ENCODE measurements at regions of chr15 and their contacts with region 1.

Region 1: GRCh38 chr15:93035953-93036800 is 52.8 kb downstream of the RGMA start:
- DNase-seq: peak; percentile 59
- H3K4me3 Mint-ChIP-seq: no peak overlapping the region
- H3K27ac Mint-ChIP-seq: no peak overlapping the region
- H3K4me1 Mint-ChIP-seq: peaks cover 9% of the 10 kb centered on the region
- H3K27me3 Mint-ChIP-seq: no peaks in the 10 kb centered on the region
- CTCF ChIP-seq: peak; percentile 55

Region 2: GRCh38 chr15:93063262-93063671 is 27.1 kb after region 1 on chr15:
- CTCF ChIA-PET with region 1: interaction called, 32 read pairs
- POLR2A ChIA-PET with region 1: no interaction called
- intact Hi-C with region 1: no loop called
- DNase-seq: peak; percentile 34
- H3K4me3 Mint-ChIP-seq: no peak overlapping the region
- H3K27ac Mint-ChIP-seq: no peak overlapping the region
- H3K4me1 Mint-ChIP-seq: peaks cover 10% of the 10 kb centered on the region
- H3K27me3 Mint-ChIP-seq: no peaks in the 10 kb centered on the region
- CTCF ChIP-seq: no peak

Region 3: DNA sequence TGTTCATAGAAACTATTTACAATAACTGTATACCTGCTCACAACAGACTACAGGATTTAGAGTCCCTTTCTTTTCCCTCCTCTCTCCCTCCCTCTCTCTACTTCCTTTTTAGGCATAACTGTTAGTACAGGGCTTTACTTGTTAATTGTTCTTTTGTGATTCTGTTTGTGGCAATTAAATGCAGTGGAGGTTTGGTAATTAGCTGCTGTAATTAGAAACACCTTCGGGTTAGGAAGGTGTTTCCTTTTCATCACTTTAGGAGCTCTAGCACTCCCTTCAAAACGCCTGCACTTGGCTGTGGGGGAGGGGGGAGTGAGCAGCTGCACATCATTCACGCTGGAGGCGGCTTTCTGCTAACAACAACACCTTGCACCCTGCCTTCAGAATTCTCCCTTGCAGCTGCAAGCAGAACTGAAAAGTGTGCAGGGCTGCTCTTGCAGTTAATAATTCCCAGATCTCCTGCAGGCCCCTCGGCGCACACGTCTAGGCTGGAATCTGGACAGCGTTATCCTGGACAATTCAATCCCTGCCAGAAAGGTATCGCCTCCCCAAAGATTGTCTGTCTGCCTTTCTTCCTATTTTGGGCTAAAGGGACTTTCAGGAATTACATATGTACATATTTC is 295.5 kb after region 1 on chr15:
- CTCF ChIA-PET with region 1: no interaction called
- POLR2A ChIA-PET with region 1: no interaction called
- intact Hi-C with region 1: loop called (anchors 5 kb)
- DNase-seq: no peak
- H3K4me3 Mint-ChIP-seq: no peak overlapping the region
- H3K27ac Mint-ChIP-seq: no peak overlapping the region
- H3K4me1 Mint-ChIP-seq: no peaks in the 10 kb centered on the region
- H3K27me3 Mint-ChIP-seq: peaks cover 13% of the 10 kb centered on the region
- CTCF ChIP-seq: no peak

Region 4: GRCh38 chr15:93974804-93975481 is 938.8 kb after region 1 on chr15:
- CTCF ChIA-PET with region 1: interaction called, 18 read pairs
- POLR2A ChIA-PET with region 1: no interaction called
- intact Hi-C with region 1: loop called (anchors 1 kb)
- DNase-seq: peak; percentile 70
- H3K4me3 Mint-ChIP-seq: no peak overlapping the region
- H3K27ac Mint-ChIP-seq: no peak overlapping the region
- H3K4me1 Mint-ChIP-seq: no peaks in the 10 kb centered on the region
- H3K27me3 Mint-ChIP-seq: no peaks in the 10 kb centered on the region
- CTCF ChIP-seq: peak; percentile 67